SK-N-SH (cell line): ENCODE measurements at regions of chr12 and their contacts with region 1.

Region 1: DNA sequence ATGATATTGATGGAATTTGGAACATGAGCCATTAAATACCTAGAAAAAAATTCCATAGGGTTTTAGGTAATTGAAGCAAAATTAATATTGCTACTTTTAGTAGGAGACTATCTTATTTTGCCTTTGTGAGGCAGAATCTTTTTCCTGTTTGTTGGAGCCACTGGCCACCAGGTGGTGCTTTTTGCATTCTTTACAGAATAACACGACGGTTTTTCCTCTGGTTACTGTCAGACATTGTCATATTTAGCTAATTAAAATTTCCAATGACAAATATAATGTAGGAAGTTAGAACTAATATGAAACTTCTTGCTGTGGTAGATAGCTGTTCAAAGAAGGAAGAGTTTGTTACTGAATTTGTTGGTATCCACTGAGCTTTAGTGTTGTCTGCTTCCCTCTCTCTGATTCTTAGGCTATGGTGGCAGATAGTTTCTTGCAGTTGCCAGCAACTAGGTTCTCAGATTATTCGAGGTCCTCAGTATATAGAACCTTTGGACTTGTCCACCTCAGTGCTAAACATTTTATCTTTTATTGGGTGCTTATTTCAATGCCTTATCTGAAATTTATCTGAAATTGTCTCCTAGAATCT is 25.7 kb downstream of the RAB21 start:
- DNase-seq: peak; percentile 43
- H3K4me3 ChIP-seq: no peak overlapping the region; a peak in 1 of 4 replicates
- H3K27ac ChIP-seq: peak overlapping the region in 1 of 2 experiments; percentile 50; a peak in 2 of 4 replicates
- H3K4me1 ChIP-seq: peaks cover 0 to 9% of the 10 kb centered on the region in 2 experiments; a peak in 2 of 4 replicates
- H3K27me3 ChIP-seq: no peaks in the 10 kb centered on the region
- CTCF ChIP-seq: peak; percentile 90
- EP300 ChIP-seq: no peak
- RAD21 ChIP-seq: peak; percentile 78

Region 2: DNA sequence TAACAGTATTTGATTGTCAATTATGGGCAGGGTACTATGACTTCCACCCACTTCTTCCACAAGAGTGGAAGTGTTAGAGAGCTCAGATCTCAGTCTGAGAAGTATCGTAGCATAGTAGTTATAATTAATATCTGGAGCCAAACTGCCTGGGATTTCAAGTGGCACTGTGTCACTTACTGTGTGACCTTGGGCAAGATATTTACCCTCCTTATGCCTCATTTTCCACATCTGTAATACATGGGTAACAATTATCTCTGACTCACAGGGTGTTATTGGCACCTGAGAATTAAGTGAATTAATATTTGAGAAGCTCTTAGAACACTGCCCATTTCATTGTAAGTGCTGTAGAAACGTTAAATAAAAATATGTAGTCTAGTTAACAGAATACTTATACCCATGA is 14.1 kb before region 1 on chr12:
- CTCF ChIA-PET with region 1: interaction called, 18 read pairs
- POLR2A ChIA-PET with region 1: no interaction called
- DNase-seq: no peak
- H3K4me3 ChIP-seq: no peak overlapping the region
- H3K27ac ChIP-seq: no peak overlapping the region
- H3K4me1 ChIP-seq: no peaks in the 10 kb centered on the region; a peak in 1 of 4 replicates
- H3K27me3 ChIP-seq: no peaks in the 10 kb centered on the region
- CTCF ChIP-seq: no peak
- EP300 ChIP-seq: no peak
- RAD21 ChIP-seq: no peak

Region 3: GRCh38 chr12:71790331-71790730 is 10.0 kb after region 1 on chr12:
- CTCF ChIA-PET with region 1: interaction called, 22 read pairs
- POLR2A ChIA-PET with region 1: no interaction called
- DNase-seq: no peak
- H3K4me3 ChIP-seq: no peak overlapping the region
- H3K27ac ChIP-seq: no peak overlapping the region
- H3K4me1 ChIP-seq: no peaks in the 10 kb centered on the region; a peak in 1 of 4 replicates
- H3K27me3 ChIP-seq: no peaks in the 10 kb centered on the region
- CTCF ChIP-seq: no peak
- EP300 ChIP-seq: no peak
- RAD21 ChIP-seq: no peak

Region 4: DNA sequence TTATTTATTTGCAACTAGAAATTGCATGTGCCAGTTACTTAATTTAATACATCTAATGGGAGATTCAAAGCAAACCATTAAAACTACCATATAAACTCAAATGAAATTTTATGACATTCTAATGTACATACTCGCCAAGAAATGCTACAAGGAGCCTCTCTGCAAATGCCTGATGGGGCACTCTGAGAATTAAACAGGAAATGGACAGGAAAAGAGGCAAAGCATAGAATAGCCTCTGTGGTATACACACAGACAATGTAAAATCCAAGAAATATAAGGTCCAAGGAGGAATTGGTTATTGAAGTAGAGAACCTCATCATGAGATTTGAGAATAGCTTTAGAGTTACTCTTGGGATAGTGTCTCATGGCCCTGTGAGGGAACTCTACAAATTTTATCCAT is 15.6 kb after region 1 on chr12:
- CTCF ChIA-PET with region 1: interaction called, 22 read pairs
- POLR2A ChIA-PET with region 1: no interaction called
- DNase-seq: no peak
- H3K4me3 ChIP-seq: no peak overlapping the region
- H3K27ac ChIP-seq: no peak overlapping the region
- H3K4me1 ChIP-seq: peaks cover 0 to 9% of the 10 kb centered on the region in 2 experiments; a peak in 1 of 4 replicates
- H3K27me3 ChIP-seq: no peaks in the 10 kb centered on the region
- CTCF ChIP-seq: no peak
- EP300 ChIP-seq: no peak
- RAD21 ChIP-seq: no peak

Region 5: GRCh38 chr12:71840231-71840847 is 60.0 kb after region 1 on chr12:
- CTCF ChIA-PET with region 1: interaction called, 24 read pairs
- POLR2A ChIA-PET with region 1: interaction called, 3 read pairs
- DNase-seq: peak; percentile 12
- H3K4me3 ChIP-seq: peak overlapping the region; percentile 85 to 87
- H3K27ac ChIP-seq: peak overlapping the region; percentile 75 to 89
- H3K4me1 ChIP-seq: peaks cover 11 to 15% of the 10 kb centered on the region in 2 experiments; a peak in 3 of 4 replicates
- H3K27me3 ChIP-seq: no peaks in the 10 kb centered on the region
- CTCF ChIP-seq: no peak
- EP300 ChIP-seq: no peak
- RAD21 ChIP-seq: no peak

Region 6: DNA sequence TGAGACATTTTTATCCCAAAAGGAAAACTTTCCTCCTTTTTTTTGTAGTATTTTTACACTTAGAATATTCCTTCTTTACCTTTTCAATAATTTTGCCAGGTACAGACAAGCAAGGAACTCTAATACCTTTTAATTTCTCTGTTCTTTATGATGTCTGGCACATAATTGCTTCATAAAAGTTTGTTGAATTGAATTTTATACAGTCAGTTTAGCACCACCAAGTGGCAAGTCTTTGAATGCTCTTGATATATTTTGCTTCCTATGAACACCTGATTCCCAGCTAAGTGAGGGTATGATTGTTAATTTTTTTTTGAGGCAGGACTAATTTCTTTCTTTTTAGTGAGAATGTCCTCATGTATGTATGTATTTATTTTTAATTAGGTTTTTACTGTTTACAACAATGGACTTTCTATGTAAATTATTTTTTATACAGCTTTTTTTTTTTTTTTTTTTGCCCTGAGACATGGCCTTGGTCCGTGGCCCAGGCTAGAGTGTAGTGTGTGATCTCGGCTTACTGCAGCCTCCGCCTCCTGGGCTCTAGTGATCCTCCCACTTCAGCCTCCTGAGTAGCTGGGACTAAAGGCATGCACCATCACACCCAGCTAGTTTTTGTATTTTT is 66.1 kb after region 1 on chr12:
- CTCF ChIA-PET with region 1: interaction called, 22 read pairs
- POLR2A ChIA-PET with region 1: no interaction called
- DNase-seq: peak; percentile 15
- H3K4me3 ChIP-seq: no peak overlapping the region
- H3K27ac ChIP-seq: no peak overlapping the region
- H3K4me1 ChIP-seq: peaks cover under 1 to 10% of the 10 kb centered on the region in 2 experiments; a peak in 2 of 4 replicates
- H3K27me3 ChIP-seq: no peaks in the 10 kb centered on the region
- CTCF ChIP-seq: peak; percentile 74
- EP300 ChIP-seq: no peak
- RAD21 ChIP-seq: peak; percentile 42; the same call in 1 of the 2 replicates

Region 7: DNA sequence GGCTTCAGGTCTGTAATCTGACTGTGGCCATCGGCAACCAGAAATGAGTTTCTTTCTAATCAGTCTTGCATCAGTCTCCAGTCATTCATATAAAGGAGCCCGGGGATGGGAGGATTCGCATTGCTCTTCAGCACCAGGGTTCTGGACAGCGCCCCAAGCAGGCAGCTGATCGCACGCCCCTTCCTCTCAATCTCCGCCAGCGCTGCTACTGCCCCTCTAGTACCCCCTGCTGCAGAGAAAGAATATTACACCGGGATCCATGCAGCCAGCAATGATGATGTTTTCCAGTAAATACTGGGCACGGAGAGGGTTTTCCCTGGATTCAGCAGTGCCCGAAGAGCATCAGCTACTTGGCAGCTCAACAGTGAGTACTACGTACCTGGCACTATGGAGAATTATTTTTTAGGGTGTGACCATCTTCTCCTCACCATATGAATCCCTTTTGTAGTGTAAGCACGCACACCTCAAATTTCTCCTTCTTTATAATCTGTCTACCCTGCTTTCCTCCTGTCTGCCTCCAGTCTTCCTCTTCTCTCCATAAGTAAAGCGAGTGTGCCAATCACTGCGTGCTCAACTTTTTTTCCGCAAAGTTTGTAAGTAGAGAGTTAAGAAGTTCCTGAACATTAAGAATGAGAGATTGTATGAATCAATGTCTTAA is 158.5 kb after region 1 on chr12 and contains the start of gene TPH2:
- CTCF ChIA-PET with region 1: interaction called, 52 read pairs
- POLR2A ChIA-PET with region 1: no interaction called
- DNase-seq: peak; percentile 63
- H3K4me3 ChIP-seq: no peak within 1 kb of the TSS
- H3K27ac ChIP-seq: no peak within 1 kb of the TSS
- H3K4me1 ChIP-seq: peaks cover 0 to 17% of the 10 kb centered on the region in 2 experiments; a peak in 2 of 4 replicates
- H3K27me3 ChIP-seq: no peaks in the 10 kb centered on the region
- CTCF ChIP-seq: peak; percentile 67
- EP300 ChIP-seq: no peak
- RAD21 ChIP-seq: peak; percentile 77
- polyA plus RNA-seq, gene TPH2: not detected in 2 replicates